ENCODE measurements at regions of chr1 and their contacts with region 1.

Region 1: DNA sequence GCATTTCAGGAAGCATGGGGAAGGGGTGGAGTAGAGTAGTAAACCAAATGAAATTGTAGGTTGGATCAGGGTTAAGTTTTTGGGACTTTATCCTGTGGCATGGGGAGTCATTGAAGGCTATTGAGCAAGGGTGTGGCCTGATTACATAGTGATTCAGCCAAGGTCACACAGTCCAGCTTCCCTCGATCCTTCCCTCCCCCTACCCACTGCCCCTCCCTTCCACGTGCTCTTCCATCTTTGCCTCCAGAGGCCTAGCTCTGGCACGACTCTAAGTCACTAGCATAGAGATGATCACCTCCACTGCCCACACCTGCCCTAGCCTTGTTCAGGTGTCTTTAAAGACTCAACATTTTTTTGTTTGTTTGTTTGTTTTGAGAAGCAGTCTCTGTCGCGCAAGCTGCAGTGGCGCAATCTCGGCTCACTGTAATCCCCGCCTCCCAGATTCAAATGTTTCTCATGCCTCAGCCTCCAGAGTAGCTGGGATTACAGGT is 37.2 kb upstream of the SLC9A1 start:
- DNase-seq: peak; percentile 63 to 67 (median 64)
- ATAC-seq: peak; percentile 94 to 98 (median 96)
- H3K4me3 ChIP-seq: no peak overlapping the region
- H3K27ac ChIP-seq: peak overlapping the region in 1 of 3 donors; percentile 44
- H3K4me1 ChIP-seq: peaks cover 0 to 10% (median 0%) of the 10 kb centered on the region in 4 donors
- H3K27me3 ChIP-seq: no peaks in the 10 kb centered on the region
- CTCF ChIP-seq: no peak
- POLR2A ChIP-seq: no peak

Region 2: GRCh38 chr1:27300341-27301051 is 108.4 kb after region 1 on chr1:
- intact Hi-C with region 1: loop called in 1 of 2 experiments (anchors 10 kb)
- DNase-seq: peak; percentile 81 to 83 (median 83)
- ATAC-seq: peak; percentile 89 to 94 (median 92)
- H3K4me3 ChIP-seq: no peak overlapping the region
- H3K27ac ChIP-seq: peak overlapping the region in 2 of 3 donors; percentile 21 to 43
- H3K4me1 ChIP-seq: no peaks in the 10 kb centered on the region
- H3K27me3 ChIP-seq: no peaks in the 10 kb centered on the region
- CTCF ChIP-seq: peak; percentile 97 to 99 (median 98)
- POLR2A ChIP-seq: no peak

Measured in right lobe of liver (tissue), 6 donors.